CD4-positive, alpha-beta T cell (primary cell): ENCODE measurements at regions of chr15 and their contacts with region 1.

Region 1: DNA sequence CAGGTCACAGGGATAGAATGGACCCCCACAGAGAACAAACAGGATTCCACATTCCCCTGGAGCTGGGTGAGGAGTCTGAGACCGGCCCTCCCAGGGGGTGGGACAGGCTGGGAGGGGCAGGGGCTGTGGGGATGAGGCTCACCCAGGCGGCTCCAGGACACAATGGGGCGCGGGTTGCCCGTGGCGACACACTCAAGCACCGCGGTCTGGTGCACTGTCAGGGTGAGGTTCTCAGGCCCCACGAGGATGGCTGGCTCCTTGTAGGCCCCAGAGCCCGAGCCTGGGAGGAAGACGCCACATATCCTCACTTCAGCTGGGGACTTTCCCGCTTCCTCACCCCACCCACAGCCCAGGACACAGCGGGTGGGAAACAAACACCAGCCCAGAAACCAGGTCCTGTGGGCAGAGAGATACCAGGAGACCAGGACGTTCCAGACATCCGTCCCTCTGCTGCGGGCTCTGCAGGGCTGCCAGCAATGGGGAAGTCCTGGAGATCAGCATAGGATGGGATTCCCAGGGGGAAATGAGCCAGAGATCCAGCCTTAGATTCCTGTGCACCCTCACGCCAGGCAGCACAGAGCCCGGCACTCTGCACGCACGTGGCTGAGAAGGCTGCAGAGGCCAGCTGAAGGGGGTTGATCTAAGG is 30.2 kb downstream of the RNU5B-1 start:
- DNase-seq: no peak
- ATAC-seq: no peak
- H3K4me3 ChIP-seq: no peak overlapping the region
- H3K4me3 Mint-ChIP-seq: no peak overlapping the region
- H3K27ac ChIP-seq: no peak overlapping the region
- H3K27ac Mint-ChIP-seq: no peak overlapping the region
- H3K4me1 ChIP-seq: no peaks in the 10 kb centered on the region
- H3K4me1 Mint-ChIP-seq: no peaks in the 10 kb centered on the region
- H3K27me3 ChIP-seq: peaks cover 0 to 2% of the 10 kb centered on the region in 2 experiments
- H3K27me3 Mint-ChIP-seq: peaks cover 12% of the 10 kb centered on the region
- CTCF ChIP-seq: no peak

Region 2: GRCh38 chr15:65361708-65362459 is 27.2 kb after region 1 on chr15:
- CTCF ChIA-PET with region 1: no interaction called
- POLR2A ChIA-PET with region 1: no interaction called
- intact Hi-C with region 1: no loop called
- DNase-seq: peak in 1 of 14 experiments; percentile 3
- ATAC-seq: no peak
- H3K4me3 ChIP-seq: no peak overlapping the region
- H3K4me3 Mint-ChIP-seq: no peak overlapping the region
- H3K27ac ChIP-seq: no peak overlapping the region
- H3K27ac Mint-ChIP-seq: no peak overlapping the region
- H3K4me1 ChIP-seq: no peaks in the 10 kb centered on the region
- H3K4me1 Mint-ChIP-seq: no peaks in the 10 kb centered on the region
- H3K27me3 ChIP-seq: peaks cover 15 to 27% of the 10 kb centered on the region in 2 experiments
- H3K27me3 Mint-ChIP-seq: peaks cover 36% of the 10 kb centered on the region
- CTCF ChIP-seq: no peak

Region 3: GRCh38 chr15:65374821-65375401 is 40.2 kb after region 1 on chr15:
- CTCF ChIA-PET with region 1: no interaction called
- POLR2A ChIA-PET with region 1: no interaction called
- intact Hi-C with region 1: loop called in 1 of 2 experiments (anchors 5 kb)
- DNase-seq: peak in 1 of 14 experiments; percentile 19
- ATAC-seq: no peak
- H3K4me3 ChIP-seq: no peak overlapping the region
- H3K4me3 Mint-ChIP-seq: no peak overlapping the region
- H3K27ac ChIP-seq: no peak overlapping the region
- H3K27ac Mint-ChIP-seq: no peak overlapping the region
- H3K4me1 ChIP-seq: peaks cover 13% of the 10 kb centered on the region
- H3K4me1 Mint-ChIP-seq: peaks cover 22% of the 10 kb centered on the region
- H3K27me3 ChIP-seq: peaks cover 38 to 64% of the 10 kb centered on the region in 2 experiments
- H3K27me3 Mint-ChIP-seq: peaks cover 75% of the 10 kb centered on the region
- CTCF ChIP-seq: no peak